Activated CD8-positive, alpha-beta T cell treated with anti-CD3 and anti-CD28 coated beads for 36 hours (primary cell): ENCODE measurements at regions of chr5 and their contacts with region 1.

Region 1: DNA sequence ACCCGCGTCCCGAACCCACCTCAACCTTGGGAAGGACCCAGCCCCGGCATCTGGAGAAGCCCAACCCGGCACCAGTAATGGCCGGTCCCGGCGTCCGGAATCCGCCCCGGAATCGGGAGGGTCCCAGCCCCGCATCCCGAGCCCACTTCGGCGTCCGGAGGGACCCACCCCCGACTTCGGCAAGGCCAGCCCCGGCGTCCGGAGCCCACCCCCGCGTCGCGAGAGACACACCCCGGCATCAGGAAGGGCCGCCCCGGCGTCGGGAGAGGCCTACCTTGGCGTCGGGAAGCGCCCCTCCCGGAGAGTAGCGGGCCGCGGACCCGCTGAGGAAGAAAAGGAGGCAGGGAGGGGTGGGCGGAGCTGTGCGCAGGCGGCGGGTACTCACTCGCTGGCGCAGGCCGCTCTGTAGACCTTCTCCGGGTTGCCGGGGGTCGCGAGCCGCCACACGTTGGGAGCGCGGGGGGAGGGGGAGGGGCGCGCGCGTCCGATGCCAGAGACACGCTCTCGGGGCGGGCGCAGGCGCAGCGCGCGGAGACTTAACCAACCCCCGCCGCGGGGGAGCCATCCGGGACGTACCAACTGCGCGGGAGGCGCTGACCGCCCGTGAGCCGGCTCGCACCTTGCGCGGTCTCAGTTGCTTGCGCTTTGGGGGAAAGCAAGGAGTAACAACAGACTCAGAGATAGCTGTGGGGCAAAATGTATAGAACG is at the start of gene UIMC1:
- DNase-seq: peak; percentile 93
- ATAC-seq: peak; percentile 93
- H3K4me3 Mint-ChIP-seq: peak within 1 kb of the TSS; percentile 93
- H3K27ac Mint-ChIP-seq: peak within 1 kb of the TSS; percentile 95
- H3K4me1 Mint-ChIP-seq: peaks cover 28% of the 10 kb centered on the region
- H3K27me3 Mint-ChIP-seq: no peaks in the 10 kb centered on the region
- CTCF ChIP-seq: no peak
- total RNA-seq, gene UIMC1: 54.1 to 57.0 TPM

Region 2: DNA sequence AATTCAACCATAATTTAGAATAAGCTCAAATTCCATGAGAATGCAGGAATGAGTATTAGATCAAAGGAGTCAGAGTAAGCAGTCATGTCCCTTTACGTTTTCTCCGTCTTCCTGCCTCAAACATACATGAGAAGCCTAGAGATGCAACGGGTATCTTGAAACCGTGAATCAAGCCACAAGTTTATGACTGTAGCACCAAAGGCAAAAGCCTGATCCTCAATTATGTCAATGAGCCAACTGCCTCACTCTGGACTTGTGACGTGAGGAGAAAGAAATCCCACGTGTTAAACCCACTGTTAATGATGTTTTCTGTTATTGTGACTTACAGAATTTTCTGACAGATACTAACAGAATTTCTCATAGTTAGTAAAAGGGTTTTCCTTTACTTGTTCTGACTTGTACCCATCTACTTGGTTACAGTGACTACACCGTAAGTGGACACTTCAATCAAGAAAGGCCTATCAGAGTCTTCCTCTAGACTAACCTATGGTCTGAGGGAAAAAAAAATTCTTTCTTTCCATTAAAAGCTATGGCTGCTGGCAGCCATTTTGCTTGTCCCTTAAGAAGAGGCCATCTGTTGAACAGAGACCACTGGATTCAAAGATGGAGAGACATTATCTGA is 72.0 kb before region 1 on chr5:
- CTCF ChIA-PET with region 1: no interaction called
- POLR2A ChIA-PET with region 1: no interaction called
- intact Hi-C with region 1: no loop called
- DNase-seq: no peak
- ATAC-seq: peak; percentile 67
- H3K4me3 Mint-ChIP-seq: no peak overlapping the region
- H3K27ac Mint-ChIP-seq: peak overlapping the region; percentile 68
- H3K4me1 Mint-ChIP-seq: peaks cover 27% of the 10 kb centered on the region
- H3K27me3 Mint-ChIP-seq: no peaks in the 10 kb centered on the region
- CTCF ChIP-seq: no peak

Region 3: DNA sequence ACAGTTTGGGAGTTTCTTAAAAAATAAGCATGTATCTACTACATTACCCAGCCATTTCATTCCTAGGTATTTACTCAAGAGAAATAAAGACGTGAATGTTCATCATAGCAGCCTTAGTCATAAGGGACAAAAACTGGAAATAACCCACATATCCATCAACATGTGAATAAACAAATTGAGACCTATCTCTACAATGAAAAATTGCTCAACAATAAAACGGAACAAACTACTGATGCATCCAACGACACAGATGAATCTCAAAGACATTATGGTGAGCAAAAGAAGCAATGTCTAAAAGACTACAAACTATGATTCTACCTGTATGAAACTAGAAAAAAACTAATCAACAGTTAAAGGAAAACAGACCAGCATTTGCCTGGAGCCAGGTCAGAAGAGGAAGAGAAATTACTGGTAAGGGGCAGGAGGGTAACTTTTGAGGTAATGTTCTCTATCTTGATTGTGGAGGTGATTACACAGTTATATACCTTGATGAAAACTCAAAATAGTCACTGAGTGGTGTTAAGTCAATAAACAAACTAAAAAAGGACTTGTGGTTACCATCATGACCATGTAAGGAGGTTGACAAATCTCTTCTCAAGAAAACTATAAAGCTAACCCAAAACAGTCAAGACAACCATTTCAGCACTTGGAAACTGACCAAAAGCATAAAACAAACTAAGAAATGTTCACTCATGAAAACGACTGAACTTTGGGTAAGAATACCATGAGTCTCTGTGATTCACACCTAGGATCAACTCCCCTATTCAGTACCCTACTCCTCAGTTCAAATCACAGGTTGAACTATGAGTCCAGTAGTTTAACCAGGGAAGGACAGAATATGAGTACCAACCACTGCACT is 10.3 kb before region 1 on chr5:
- CTCF ChIA-PET with region 1: interaction called, 5 read pairs
- POLR2A ChIA-PET with region 1: interaction called, 11 read pairs
- intact Hi-C with region 1: no loop called
- DNase-seq: no peak
- ATAC-seq: peak; percentile 24
- H3K4me3 Mint-ChIP-seq: no peak overlapping the region
- H3K27ac Mint-ChIP-seq: peak overlapping the region; percentile 69
- H3K4me1 Mint-ChIP-seq: peaks cover 36% of the 10 kb centered on the region
- H3K27me3 Mint-ChIP-seq: no peaks in the 10 kb centered on the region
- CTCF ChIP-seq: no peak

Region 4: GRCh38 chr5:177022384-177023308 is 16.2 kb after region 1 on chr5 and contains the start of gene ZNF346:
- CTCF ChIA-PET with region 1: interaction called, 14 read pairs
- POLR2A ChIA-PET with region 1: interaction called, 29 read pairs
- intact Hi-C with region 1: no loop called
- DNase-seq: peak; percentile 95
- ATAC-seq: peak; percentile 97
- H3K4me3 Mint-ChIP-seq: peak within 1 kb of the TSS; percentile 96
- H3K27ac Mint-ChIP-seq: peak within 1 kb of the TSS; percentile 94
- H3K4me1 Mint-ChIP-seq: peaks cover 30% of the 10 kb centered on the region
- H3K27me3 Mint-ChIP-seq: no peaks in the 10 kb centered on the region
- CTCF ChIP-seq: no peak
- total RNA-seq, gene ZNF346: 15.0 to 17.0 TPM

Region 5: DNA sequence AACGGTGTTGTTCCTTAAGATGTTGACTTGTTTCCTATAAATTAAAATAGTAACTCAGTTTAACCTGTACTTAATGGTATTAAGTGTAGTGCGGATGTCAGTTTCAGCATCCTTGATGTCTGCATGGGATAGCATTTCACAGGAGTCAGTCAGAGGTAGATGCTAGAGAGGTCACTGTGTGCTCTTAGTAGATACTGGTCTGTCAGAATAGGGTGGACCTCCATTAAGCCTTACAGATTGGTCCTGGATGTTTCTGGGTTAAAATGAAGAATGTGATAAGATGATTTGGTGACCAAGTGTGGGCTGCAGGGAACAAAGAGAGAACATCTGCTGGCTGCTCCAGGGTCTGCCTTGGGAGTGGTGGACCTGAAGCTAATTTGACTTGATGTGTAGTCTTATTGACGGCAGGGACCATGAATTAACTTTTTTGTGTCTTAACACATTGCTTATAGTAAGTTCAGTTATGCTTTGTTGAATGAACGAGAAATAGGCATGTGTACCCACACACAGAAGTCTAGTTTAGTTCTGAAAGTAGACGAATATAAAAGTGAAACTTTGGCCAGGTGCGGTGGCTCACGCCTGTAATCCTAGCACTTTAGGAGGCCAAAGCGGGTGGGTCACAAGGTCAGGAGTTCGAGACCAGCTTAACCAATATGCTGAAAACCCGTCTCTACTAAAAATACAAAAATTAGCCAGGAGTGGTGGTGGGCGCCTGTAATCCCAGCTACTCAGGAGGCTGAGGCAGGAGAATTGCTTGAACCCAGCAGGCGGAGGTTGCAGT is 284.6 kb after region 1 on chr5:
- CTCF ChIA-PET with region 1: no interaction called
- POLR2A ChIA-PET with region 1: no interaction called
- intact Hi-C with region 1: no loop called
- DNase-seq: no peak
- ATAC-seq: no peak
- H3K4me3 Mint-ChIP-seq: no peak overlapping the region
- H3K27ac Mint-ChIP-seq: peak overlapping the region; percentile 32
- H3K4me1 Mint-ChIP-seq: peaks cover 11% of the 10 kb centered on the region
- H3K27me3 Mint-ChIP-seq: no peaks in the 10 kb centered on the region
- CTCF ChIP-seq: no peak

Region 6: DNA sequence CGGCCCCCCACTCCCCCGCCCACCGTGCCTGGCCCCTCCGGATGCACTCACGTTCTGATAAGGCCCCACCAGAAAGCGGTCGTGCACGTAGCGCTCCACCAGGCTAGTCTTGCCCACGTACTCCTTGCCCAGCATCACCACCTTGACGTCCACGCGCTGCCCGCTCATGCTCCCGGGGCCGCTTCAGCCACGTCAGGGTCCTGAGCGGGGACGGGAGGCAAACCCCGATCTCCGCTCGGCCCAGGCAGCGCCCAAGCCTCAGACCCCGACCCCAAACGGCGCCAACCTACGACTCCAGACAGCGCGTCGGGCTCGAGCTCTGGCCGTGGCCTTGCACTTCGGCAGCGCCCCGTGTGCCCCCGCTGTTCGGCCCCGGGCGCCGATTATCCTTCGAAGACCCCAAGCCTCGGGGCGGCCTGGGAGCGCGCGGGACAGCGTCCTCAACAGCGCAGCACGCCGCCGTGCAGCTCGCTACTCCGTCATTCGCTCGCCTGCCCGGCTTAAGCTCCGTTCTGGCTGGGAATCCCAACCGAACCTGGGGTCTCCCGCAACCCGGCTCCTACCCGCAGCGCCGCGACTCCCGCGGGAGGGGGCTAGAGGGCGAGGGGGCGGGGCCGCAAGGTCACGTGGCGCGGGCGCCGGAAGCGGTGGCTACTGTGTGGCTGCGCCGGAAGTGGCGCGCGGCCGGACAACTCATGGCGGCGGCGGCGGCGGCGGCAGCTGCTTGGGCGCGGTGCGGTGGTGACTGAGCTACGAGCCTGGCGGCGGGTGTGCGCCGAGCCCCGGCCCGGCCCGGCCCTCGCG is 296.9 kb after region 1 on chr5 and contains the starts of genes PRELID1 and RAB24:
- CTCF ChIA-PET with region 1: no interaction called
- POLR2A ChIA-PET with region 1: no interaction called
- intact Hi-C with region 1: no loop called
- DNase-seq: peak; percentile 91
- ATAC-seq: peak; percentile 72
- H3K4me3 Mint-ChIP-seq: peak within 1 kb of the TSS; percentile 98
- H3K27ac Mint-ChIP-seq: peak within 1 kb of the TSS; percentile 91
- H3K4me1 Mint-ChIP-seq: peaks cover 57% of the 10 kb centered on the region
- H3K27me3 Mint-ChIP-seq: no peaks in the 10 kb centered on the region
- CTCF ChIP-seq: peak; percentile 51
- total RNA-seq, gene PRELID1: 222 to 233 TPM
- total RNA-seq, gene RAB24: 26.6 TPM